Mammary epithelial cell (primary cell): ENCODE measurements at regions of chr18 and their contacts with region 1.

Region 1: DNA sequence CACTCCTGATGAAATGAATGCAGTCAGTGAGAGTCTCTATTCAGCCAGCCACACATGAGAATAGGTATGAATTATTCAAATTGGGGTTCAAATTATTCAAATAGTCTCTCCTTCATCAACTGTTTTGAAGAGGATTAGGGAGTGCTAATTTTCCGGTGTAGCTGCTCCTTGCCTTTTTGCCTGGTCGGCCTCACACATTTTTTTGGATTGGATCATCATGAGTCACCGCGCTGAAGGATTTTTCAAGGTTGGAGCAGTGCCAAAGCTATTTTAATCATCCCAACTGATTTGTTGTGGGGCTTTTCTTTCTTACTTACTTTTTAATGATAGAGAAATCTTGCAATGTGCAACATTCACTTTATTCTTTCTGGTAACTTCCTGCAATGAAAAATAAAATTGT is 2.4 kb upstream of the DTNA start:
- DNase-seq: peak; percentile 92
- H3K4me3 ChIP-seq: peak overlapping the region in 1 of 3 experiments; percentile 23
- H3K27ac ChIP-seq: peak overlapping the region; percentile 76
- H3K4me1 ChIP-seq: peaks cover 39% of the 10 kb centered on the region
- H3K27me3 ChIP-seq: no peaks in the 10 kb centered on the region
- CTCF ChIP-seq: no peak

Region 2: GRCh38 chr18:34695310-34695709 is 12.4 kb before region 1 on chr18:
- CTCF ChIA-PET with region 1: no interaction called
- dilution Hi-C with region 1: no loop called
- in situ Hi-C with region 1: no loop called
- intact Hi-C with region 1: loop called (anchors 2 kb)
- DNase-seq: peak; percentile 30
- H3K4me3 ChIP-seq: no peak overlapping the region
- H3K27ac ChIP-seq: peak overlapping the region; percentile 54
- H3K4me1 ChIP-seq: peaks cover 36% of the 10 kb centered on the region
- H3K27me3 ChIP-seq: no peaks in the 10 kb centered on the region
- CTCF ChIP-seq: no peak

Region 3: DNA sequence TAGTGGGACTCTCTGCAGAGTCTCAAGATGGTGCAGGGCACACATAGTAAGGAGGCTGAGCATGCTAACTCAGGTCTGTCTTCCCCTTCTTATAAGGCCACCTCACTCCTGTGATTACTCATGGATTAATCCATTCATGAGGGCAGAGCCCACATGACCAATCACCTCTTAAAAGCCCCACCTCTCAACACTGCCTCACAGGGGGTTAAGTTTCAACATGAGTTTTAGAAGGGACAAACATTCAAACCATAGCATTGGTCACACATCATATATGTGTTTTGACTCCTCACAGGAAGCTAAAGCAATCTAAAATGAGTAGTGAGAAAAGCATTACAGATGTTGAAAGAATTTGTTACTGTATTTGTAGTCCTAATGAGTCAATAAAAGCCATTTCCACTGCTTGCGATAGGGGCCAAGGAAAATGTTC is 59.9 kb after region 1 on chr18:
- CTCF ChIA-PET with region 1: no interaction called
- dilution Hi-C with region 1: no loop called
- in situ Hi-C with region 1: loop called in 1 of 2 experiments (anchors 10 kb)
- intact Hi-C with region 1: loop called (anchors 2 kb)
- DNase-seq: peak; percentile 93
- H3K4me3 ChIP-seq: no peak overlapping the region
- H3K27ac ChIP-seq: peak overlapping the region; percentile 33
- H3K4me1 ChIP-seq: peaks cover 16% of the 10 kb centered on the region
- H3K27me3 ChIP-seq: no peaks in the 10 kb centered on the region
- CTCF ChIP-seq: no peak

Region 4: DNA sequence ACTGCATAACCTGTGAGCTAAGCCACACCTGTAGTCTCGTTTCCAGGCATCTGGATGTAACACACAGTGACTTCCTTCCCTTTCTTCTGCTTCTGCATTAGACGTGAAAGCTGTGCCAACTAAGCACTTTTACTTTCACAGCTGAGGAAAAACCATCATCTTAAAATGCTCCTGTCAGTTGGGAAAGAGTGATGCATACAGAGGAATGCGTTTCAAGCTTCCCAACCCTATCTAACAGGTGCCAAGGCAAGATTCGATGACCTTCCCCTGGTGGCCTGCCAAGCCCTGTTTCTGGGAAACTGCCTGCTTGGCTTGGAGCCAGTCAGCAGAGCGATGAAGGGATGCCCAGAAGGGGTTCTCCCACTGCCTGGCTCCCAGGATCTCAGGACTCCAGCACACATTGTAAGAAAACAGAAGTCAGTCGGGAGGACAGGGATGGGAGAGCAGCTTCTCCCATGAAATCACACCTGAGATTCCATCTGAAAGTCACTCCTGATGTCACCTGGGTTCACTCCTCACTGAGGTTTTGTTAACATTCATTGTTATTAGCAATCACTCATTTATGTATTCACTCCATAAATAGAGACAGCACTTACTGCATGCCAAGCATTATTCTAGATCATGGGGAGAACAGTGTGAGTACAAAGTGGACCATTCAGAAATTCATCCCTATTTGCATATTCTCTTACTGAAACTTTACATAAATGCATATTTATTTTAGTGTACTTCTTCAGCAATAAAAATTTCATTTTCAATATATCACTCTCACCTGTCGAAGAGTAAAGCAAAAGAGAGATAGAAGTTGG is 66.5 kb after region 1 on chr18:
- CTCF ChIA-PET with region 1: no interaction called
- dilution Hi-C with region 1: no loop called
- in situ Hi-C with region 1: loop called in 1 of 2 experiments (anchors 10 kb)
- intact Hi-C with region 1: no loop called
- DNase-seq: peak; percentile 43
- H3K4me3 ChIP-seq: no peak overlapping the region
- H3K27ac ChIP-seq: no peak overlapping the region
- H3K4me1 ChIP-seq: peaks cover 18% of the 10 kb centered on the region
- H3K27me3 ChIP-seq: no peaks in the 10 kb centered on the region
- CTCF ChIP-seq: no peak

Region 5: GRCh38 chr18:34976899-34977837 is 269.5 kb after region 1 on chr18:
- CTCF ChIA-PET with region 1: no interaction called
- dilution Hi-C with region 1: no loop called
- in situ Hi-C with region 1: no loop called
- intact Hi-C with region 1: loop called (anchors 10 kb)
- DNase-seq: no peak
- H3K4me3 ChIP-seq: peak overlapping the region; percentile 36 to 53 (median 52)
- H3K27ac ChIP-seq: no peak overlapping the region
- H3K4me1 ChIP-seq: peaks cover 28% of the 10 kb centered on the region
- H3K27me3 ChIP-seq: peaks cover 17% of the 10 kb centered on the region
- CTCF ChIP-seq: no peak